ENCODE measurements at regions of chr10 and their contacts with region 1.

Region 1: GRCh38 chr10:29535012-29535777 is 99.6 kb downstream of the SVIL start:
- H3K4me3 ChIP-seq: no peak overlapping the region
- H3K27ac ChIP-seq: peak overlapping the region; percentile 62
- H3K4me1 ChIP-seq: peaks cover 24% of the 10 kb centered on the region
- CTCF ChIP-seq: peak; percentile 92

Region 2: GRCh38 chr10:29517352-29517923 is 17.8 kb before region 1 on chr10:
- CTCF ChIA-PET with region 1: interaction called, 25 read pairs
- POLR2A ChIA-PET with region 1: no interaction called
- H3K4me3 ChIP-seq: no peak overlapping the region
- H3K27ac ChIP-seq: no peak overlapping the region
- H3K4me1 ChIP-seq: no peaks in the 10 kb centered on the region
- CTCF ChIP-seq: 0 out of 2 replicates have a peak, but pooled peaks have one; percentile 19

Region 3: GRCh38 chr10:29555746-29556481 is 20.7 kb after region 1 on chr10:
- CTCF ChIA-PET with region 1: interaction called, 17 read pairs
- POLR2A ChIA-PET with region 1: no interaction called
- H3K4me3 ChIP-seq: no peak overlapping the region
- H3K27ac ChIP-seq: no peak overlapping the region
- H3K4me1 ChIP-seq: peaks cover 6% of the 10 kb centered on the region; the same call in 1 of the 2 replicates
- CTCF ChIP-seq: no peak

Region 4: GRCh38 chr10:29627201-29628141 is 92.3 kb after region 1 on chr10:
- CTCF ChIA-PET with region 1: no interaction called
- POLR2A ChIA-PET with region 1: no interaction called
- H3K4me3 ChIP-seq: no peak overlapping the region
- H3K27ac ChIP-seq: no peak overlapping the region
- H3K4me1 ChIP-seq: peaks cover 9% of the 10 kb centered on the region
- CTCF ChIP-seq: no peak